ENCODE measurements at regions of chr12 and their contacts with region 1.

Region 1: DNA sequence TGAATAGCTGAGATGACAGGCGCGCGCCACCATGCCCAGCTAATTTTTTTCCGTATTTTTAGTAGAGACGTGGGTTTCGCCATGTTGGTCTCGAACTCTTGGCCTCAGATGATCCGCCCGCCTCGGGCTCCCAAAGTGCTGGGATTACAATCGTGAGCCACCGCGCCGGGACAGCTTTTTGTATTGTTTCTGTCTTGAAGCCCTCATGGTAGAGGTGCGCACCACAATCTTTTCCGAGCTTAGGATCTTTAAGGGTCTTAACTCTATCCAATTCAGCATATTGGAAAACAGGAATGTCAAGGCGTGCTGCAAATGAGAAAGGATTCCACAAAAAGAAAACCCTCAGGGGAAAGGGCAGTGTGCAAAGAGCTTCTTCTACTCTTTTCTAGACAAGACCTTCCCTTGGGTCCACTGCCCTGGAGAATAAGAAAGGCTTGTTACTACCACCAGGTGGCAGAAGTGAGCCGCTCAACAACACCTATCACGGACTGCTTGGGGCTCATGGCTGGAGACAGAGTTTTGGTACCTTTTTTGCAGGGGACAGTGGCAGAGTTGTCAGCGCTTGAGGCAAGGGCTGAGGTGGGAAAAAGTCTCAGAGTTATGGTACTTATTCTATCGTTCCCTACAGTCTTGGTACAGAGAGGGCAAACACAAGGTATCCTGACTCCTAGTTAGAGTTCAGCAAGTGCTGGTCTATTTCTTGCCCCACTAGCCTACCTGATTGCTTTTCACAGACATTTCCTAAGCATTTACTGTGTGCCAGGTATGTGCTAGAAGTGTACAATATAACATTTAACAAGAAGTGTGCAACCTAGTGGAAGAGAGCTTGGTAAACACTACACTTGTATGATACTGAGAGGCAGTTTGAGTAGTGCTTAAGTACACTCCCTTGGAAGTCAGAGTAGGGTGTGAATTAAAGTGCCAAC is 16.4 kb upstream of the SP7 start:
- DNase-seq: peak; percentile 72 to 82 (median 76)
- ATAC-seq: peak; percentile 99 to 100 (median 100)
- H3K4me3 ChIP-seq: no peak overlapping the region
- H3K27ac ChIP-seq: no peak overlapping the region
- H3K4me1 ChIP-seq: peaks cover 0 to 5% (median 0%) of the 10 kb centered on the region in 4 donors
- H3K27me3 ChIP-seq: no peaks in the 10 kb centered on the region
- CTCF ChIP-seq: peak; percentile 84 to 91 (median 89)
- POLR2A ChIP-seq: no peak

Region 2: DNA sequence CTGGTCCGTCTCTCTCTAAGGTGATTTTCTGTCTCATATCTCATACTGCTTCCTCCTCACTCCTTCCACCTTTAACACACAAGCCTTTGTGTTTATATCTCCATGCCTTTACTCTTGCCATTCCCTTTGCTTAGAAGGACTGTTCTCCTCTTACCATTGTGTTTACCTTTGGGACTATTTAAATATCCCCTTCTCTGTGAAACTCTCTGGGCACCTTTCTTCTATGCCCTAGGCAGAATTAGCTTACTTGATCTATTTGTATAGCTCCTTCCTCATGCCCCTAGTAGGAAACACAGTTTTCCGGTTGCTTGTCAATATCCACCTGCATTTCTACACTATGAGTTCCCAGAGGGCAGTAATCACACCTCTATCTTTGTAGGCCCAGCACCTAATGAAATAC is 67.2 kb after region 1 on chr12:
- intact Hi-C with region 1: loop called (anchors 2 to 5 kb)
- DNase-seq: no peak
- ATAC-seq: no peak
- H3K4me3 ChIP-seq: no peak overlapping the region
- H3K27ac ChIP-seq: no peak overlapping the region
- H3K4me1 ChIP-seq: peaks cover 0 to 5% (median 1%) of the 10 kb centered on the region in 4 donors
- H3K27me3 ChIP-seq: no peaks in the 10 kb centered on the region
- CTCF ChIP-seq: no peak
- POLR2A ChIP-seq: no peak

Region 3: DNA sequence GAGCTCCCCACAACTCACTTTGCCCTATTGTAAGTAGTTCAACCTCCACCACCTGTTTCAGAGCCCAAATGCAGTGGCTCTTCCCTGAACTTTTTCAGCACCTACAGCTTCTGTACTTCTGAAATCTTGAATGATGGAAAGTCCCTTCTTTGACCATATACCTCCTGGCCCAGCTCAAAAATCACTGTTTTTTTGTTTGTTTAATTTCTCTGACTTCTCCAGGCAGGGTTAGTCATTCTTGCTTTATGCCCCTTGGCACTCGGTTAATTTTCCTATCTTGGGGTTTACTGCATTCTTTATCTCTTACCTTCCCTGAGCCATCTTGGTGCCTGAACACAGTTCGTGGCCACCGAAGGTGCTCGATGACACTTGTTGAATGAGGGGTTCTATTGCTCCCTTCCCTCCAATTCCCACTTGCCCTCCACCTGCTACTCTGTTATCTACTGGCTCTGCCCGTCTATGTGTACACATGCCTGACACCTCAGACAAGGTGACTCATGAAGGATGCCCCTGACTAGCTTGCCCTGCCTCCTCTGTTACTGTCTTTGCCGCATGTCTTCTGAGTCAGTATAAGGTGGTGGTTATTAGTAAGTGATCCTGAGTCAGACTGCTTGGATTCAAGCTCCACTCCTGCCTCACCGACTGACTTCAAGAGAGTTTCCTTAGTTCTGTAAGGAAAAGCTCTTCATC is 75.5 kb after region 1 on chr12:
- intact Hi-C with region 1: loop called in 1 of 2 experiments (anchors 5 kb)
- DNase-seq: peak in 1 of 3 donors; percentile 15
- ATAC-seq: peak in 1 of 4 donors; percentile 49
- H3K4me3 ChIP-seq: no peak overlapping the region
- H3K27ac ChIP-seq: no peak overlapping the region
- H3K4me1 ChIP-seq: no peaks in the 10 kb centered on the region
- H3K27me3 ChIP-seq: no peaks in the 10 kb centered on the region
- CTCF ChIP-seq: no peak
- POLR2A ChIP-seq: no peak

Measured in right lobe of liver (tissue), 6 donors.